ENCODE measurements at regions of chr3 and their contacts with region 1.

Region 1: GRCh38 chr3:195001961-195002861 is 268.7 kb downstream of the XXYLT1 start:
- DNase-seq: peak; percentile 55 to 77
- ATAC-seq: peak; percentile 65 to 86 (median 82)
- H3K4me3 ChIP-seq: no peak overlapping the region
- H3K27ac ChIP-seq: peak overlapping the region; percentile 53
- H3K4me1 ChIP-seq: peaks cover 13% of the 10 kb centered on the region
- H3K27me3 ChIP-seq: no peaks in the 10 kb centered on the region
- CTCF ChIP-seq: peak; percentile 55

Region 2: DNA sequence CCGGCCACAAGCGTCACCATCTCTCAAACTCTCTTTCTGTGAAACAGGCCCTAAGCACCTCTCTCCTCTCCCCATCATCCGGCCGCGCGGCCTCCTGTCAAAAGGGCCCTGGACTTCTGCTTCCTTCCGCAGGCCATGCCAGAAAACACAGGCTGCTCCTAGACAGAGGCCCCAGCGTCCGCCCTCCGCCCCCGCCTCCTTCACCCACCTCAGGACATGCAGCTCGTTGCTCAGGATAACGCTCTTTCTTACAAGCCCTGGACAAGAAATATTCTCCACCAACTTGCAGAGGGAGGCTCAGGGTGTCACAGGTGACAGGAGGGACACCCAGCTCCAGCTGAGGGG is 56.8 kb after region 1 on chr3:
- intact Hi-C with region 1: no loop called
- DNase-seq: peak in 1 of 2 donors; percentile 66
- ATAC-seq: no peak
- H3K4me3 ChIP-seq: no peak overlapping the region
- H3K27ac ChIP-seq: no peak overlapping the region
- H3K4me1 ChIP-seq: peaks cover 8% of the 10 kb centered on the region
- H3K27me3 ChIP-seq: no peaks in the 10 kb centered on the region
- CTCF ChIP-seq: no peak

Region 3: GRCh38 chr3:195250473-195251251 is 248.5 kb after region 1 on chr3:
- intact Hi-C with region 1: loop called in 1 of 2 experiments (anchors 5 kb)
- DNase-seq: peak in 1 of 2 donors; percentile 62
- ATAC-seq: peak in 1 of 4 donors; percentile 50
- H3K4me3 ChIP-seq: no peak overlapping the region
- H3K27ac ChIP-seq: no peak overlapping the region
- H3K4me1 ChIP-seq: peaks cover 10% of the 10 kb centered on the region
- H3K27me3 ChIP-seq: no peaks in the 10 kb centered on the region
- CTCF ChIP-seq: peak; percentile 22